ENCODE measurements at regions of chr12 and their contacts with region 1.

Region 1: GRCh38 chr12:116183741-116184141 is 93.8 kb downstream of the MED13L start:
- DNase-seq: no peak
- H3K4me3 Mint-ChIP-seq: no peak overlapping the region
- H3K27ac Mint-ChIP-seq: no peak overlapping the region
- H3K4me1 Mint-ChIP-seq: peaks cover 57% of the 10 kb centered on the region
- H3K27me3 Mint-ChIP-seq: no peaks in the 10 kb centered on the region

Region 2: DNA sequence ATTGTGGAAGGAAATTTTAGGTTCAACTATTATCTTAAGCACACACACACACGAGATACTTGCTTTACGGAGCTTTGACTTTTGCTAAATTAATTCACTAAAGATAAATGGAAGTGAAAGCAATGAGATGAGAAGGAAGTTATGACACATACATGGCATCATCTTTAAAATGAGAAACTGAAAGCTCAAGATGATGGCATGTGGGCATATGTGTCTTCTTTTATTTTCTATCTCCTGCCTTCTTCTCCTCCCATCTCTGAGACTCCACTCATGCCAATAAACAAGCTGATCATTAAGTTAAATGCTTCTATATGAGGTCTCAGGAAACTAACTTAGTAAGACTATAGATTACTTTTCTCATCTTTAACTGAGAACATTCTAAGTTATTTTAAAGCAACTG is 123.0 kb before region 1 on chr12:
- intact Hi-C with region 1: loop called (anchors 2 kb)
- DNase-seq: peak; percentile 69
- H3K4me3 Mint-ChIP-seq: peak overlapping the region; percentile 81
- H3K27ac Mint-ChIP-seq: peak overlapping the region; percentile 91
- H3K4me1 Mint-ChIP-seq: peaks cover 22% of the 10 kb centered on the region
- H3K27me3 Mint-ChIP-seq: no peaks in the 10 kb centered on the region

Region 3: GRCh38 chr12:116087962-116088361 is 95.8 kb before region 1 on chr12:
- intact Hi-C with region 1: loop called (anchors 5 kb)
- DNase-seq: peak; percentile 58
- H3K4me3 Mint-ChIP-seq: peak overlapping the region; percentile 25
- H3K27ac Mint-ChIP-seq: peak overlapping the region; percentile 27
- H3K4me1 Mint-ChIP-seq: peaks cover 39% of the 10 kb centered on the region
- H3K27me3 Mint-ChIP-seq: no peaks in the 10 kb centered on the region

Region 4: DNA sequence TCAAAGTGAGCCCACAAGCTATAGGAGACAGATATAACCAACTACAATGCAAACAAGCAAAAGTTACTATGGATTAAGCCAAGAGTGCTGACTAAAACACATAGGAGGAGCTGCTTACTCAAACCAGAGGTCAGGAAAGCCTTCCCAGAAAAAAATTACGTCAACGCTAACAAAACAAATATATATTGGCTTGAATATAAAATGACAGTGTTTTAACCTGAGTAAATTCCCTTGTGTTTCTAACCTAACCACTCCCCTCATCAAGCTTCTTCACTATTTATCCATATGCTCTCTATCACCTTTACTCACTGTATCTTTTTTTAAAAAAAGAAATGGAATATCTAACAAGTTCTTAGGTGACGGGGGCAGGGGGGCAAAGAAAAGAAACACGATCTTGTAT is 22.2 kb before region 1 on chr12:
- intact Hi-C with region 1: no loop called
- DNase-seq: no peak
- H3K4me3 Mint-ChIP-seq: no peak overlapping the region
- H3K27ac Mint-ChIP-seq: no peak overlapping the region
- H3K4me1 Mint-ChIP-seq: peaks cover 27% of the 10 kb centered on the region
- H3K27me3 Mint-ChIP-seq: no peaks in the 10 kb centered on the region

Region 5: DNA sequence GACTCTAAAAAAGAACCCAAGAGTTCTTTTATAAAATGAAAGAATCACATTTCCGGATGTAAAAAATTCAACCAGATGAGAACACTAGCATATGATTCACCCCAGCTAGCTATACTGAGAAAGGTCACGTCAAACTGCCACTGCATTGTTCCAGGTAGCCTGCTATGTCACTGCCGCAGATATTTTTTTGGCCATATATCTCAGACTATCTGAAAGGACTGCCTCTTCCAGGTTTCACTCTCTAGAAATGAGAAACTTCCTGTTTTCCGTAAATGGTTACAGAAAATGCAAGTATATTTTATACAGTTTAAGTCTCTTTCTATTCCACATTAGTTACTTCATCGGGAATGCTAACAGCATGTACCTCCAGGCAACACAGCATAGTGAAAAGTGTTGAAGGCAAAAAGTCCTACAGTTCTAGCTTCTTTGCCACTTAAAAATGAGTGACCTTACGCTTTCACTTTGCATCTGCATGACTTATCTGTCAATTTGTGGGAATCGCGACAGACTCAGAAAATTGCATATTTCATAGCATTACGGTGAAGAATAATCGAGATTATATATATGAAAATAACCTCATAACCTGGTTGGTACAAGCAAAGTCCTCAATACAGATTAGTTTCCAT is 11.4 kb before region 1 on chr12:
- intact Hi-C with region 1: loop called (anchors 2 kb)
- DNase-seq: peak; percentile 84
- H3K4me3 Mint-ChIP-seq: peak overlapping the region; percentile 81
- H3K27ac Mint-ChIP-seq: peak overlapping the region; percentile 95
- H3K4me1 Mint-ChIP-seq: peaks cover 48% of the 10 kb centered on the region
- H3K27me3 Mint-ChIP-seq: no peaks in the 10 kb centered on the region

Region 6: GRCh38 chr12:116406516-116406915 is 222.8 kb after region 1 on chr12:
- intact Hi-C with region 1: no loop called
- DNase-seq: no peak
- H3K4me3 Mint-ChIP-seq: no peak overlapping the region
- H3K27ac Mint-ChIP-seq: no peak overlapping the region
- H3K4me1 Mint-ChIP-seq: no peaks in the 10 kb centered on the region
- H3K27me3 Mint-ChIP-seq: no peaks in the 10 kb centered on the region